ENCODE measurements at regions of chr17 and their contacts with region 1.

Region 1: DNA sequence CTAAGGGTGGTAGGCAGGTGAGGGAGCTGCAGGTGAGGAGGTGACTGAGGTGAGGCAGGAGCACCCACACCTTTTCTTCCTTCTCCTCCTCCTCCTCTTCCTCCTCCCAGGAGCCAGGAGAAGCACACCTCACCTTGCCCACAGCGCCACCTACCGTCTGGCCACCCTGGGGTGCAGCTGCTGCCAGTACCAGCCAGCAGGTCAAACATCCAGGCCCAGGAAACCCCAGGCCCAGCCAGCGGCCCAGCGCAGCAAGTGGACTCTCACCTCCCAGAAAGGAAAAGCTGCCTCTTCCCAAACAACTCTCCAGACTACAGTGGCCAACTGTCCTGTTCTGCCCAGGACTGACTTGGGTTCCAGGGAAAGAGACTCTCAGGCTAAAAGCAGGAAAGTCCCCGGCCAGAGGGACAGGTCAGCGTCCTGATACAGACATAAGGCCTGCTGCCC is 22.7 kb downstream of the PEMT start:
- DNase-seq: peak in 8 of 10 donors; percentile 26 to 76 (median 62)
- H3K4me3 ChIP-seq: no peak overlapping the region
- H3K27ac ChIP-seq: no peak overlapping the region
- H3K27me3 ChIP-seq: no peaks in the 10 kb centered on the region
- CTCF ChIP-seq: peak; percentile 18 to 72 (median 61)

Region 2: DNA sequence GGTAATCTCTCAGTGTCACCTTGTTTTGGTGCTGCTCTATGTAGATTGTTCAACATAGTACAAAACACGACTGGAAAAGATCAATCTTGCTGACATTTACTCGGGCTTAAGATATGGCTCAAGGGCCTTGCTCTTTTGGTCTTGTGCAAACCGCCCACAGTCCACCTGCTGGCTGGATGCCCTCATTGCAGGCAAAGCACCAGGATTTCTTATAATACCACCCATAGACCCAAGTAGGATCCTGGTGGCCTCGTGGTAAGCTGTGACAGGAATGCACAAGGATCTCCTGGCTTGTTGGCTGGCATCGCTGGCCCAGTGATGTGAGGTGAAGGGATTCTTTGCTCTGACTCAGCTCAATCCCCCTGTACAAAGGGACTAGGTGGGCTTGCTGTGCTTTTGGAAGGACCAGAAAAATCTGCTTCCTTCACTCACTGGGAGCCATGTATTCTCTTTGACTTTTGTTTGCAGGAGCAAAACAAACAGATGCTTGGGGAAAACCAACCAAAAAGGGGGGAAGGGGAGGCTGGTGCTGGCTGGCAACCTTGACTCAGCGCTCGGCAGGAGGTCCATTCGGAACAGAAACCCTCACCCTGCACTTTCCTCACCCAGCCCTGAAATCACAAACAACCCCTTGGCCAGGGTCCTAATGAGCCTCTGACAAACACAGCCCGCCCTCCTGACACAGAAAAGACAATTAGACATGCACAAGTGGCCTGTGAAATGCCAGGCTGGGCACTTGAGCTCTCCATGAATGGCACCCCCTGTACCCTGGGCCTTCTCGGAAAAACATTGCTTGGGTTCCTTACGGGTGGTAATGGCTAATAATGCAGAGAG is 128.5 kb before region 1 on chr17:
- intact Hi-C with region 1: no loop called
- DNase-seq: peak in 6 of 10 donors; percentile 30 to 59 (median 51)
- H3K4me3 ChIP-seq: no peak overlapping the region
- H3K27ac ChIP-seq: peak overlapping the region in 7 of 59 donors; percentile 10 to 55 (median 34)
- H3K27me3 ChIP-seq: peaks cover 0 to 6% (median 0%) of the 10 kb centered on the region in 45 donors
- CTCF ChIP-seq: peak in 51 of 56 donors; percentile 9 to 63 (median 40)

Region 3: GRCh38 chr17:17641621-17642409 is 73.0 kb after region 1 on chr17:
- intact Hi-C with region 1: loop called in 1 of 2 experiments (anchors 5 kb)
- DNase-seq: peak; percentile 64 to 88 (median 78)
- H3K4me3 ChIP-seq: no peak overlapping the region
- H3K27ac ChIP-seq: peak overlapping the region in 1 of 59 donors; percentile 22
- H3K27me3 ChIP-seq: no peaks in the 10 kb centered on the region
- CTCF ChIP-seq: peak; percentile 68 to 96 (median 91)